Caco-2 (cell line): ENCODE measurements at regions of chr1 and their contacts with region 1.

Region 1: GRCh38 chr1:203216274-203217138 is 13.0 kb downstream of the CHIT1 start:
- DNase-seq: peak; percentile 59 to 80
- H3K4me3 ChIP-seq: no peak overlapping the region
- H3K4me3 Mint-ChIP-seq: no peak overlapping the region
- H3K27ac Mint-ChIP-seq: peak overlapping the region; percentile 72
- H3K4me1 ChIP-seq: peaks cover 38% of the 10 kb centered on the region
- H3K4me1 Mint-ChIP-seq: peaks cover 34% of the 10 kb centered on the region
- H3K27me3 ChIP-seq: no peaks in the 10 kb centered on the region
- H3K27me3 Mint-ChIP-seq: no peaks in the 10 kb centered on the region
- CTCF ChIP-seq: peak; percentile 65 to 84

Region 2: DNA sequence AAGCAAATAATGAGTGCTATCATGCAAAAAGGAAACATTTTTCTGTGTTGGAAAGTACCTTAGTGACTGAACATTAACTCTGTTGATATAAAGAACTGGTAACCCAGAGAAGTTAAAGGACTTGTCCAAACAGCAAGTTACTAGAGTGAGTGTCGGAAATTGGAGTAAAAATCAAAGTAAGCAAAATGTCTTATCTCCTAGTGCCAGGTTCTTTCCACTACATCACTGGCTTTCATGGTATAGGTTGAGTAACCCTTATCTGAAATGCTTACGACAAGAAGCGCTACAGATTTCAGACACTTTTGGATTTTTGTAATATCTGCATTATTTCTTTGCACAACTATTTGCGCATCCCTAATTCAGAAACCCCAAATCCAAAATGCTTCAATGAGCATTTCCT is 311.2 kb before region 1 on chr1:
- CTCF ChIA-PET with region 1: no interaction called
- POLR2A ChIA-PET with region 1: no interaction called
- intact Hi-C with region 1: no loop called
- DNase-seq: no peak
- H3K4me3 ChIP-seq: no peak overlapping the region
- H3K4me3 Mint-ChIP-seq: no peak overlapping the region
- H3K27ac Mint-ChIP-seq: no peak overlapping the region
- H3K4me1 ChIP-seq: no peaks in the 10 kb centered on the region
- H3K4me1 Mint-ChIP-seq: no peaks in the 10 kb centered on the region
- H3K27me3 ChIP-seq: no peaks in the 10 kb centered on the region
- H3K27me3 Mint-ChIP-seq: no peaks in the 10 kb centered on the region
- CTCF ChIP-seq: no peak

Region 3: DNA sequence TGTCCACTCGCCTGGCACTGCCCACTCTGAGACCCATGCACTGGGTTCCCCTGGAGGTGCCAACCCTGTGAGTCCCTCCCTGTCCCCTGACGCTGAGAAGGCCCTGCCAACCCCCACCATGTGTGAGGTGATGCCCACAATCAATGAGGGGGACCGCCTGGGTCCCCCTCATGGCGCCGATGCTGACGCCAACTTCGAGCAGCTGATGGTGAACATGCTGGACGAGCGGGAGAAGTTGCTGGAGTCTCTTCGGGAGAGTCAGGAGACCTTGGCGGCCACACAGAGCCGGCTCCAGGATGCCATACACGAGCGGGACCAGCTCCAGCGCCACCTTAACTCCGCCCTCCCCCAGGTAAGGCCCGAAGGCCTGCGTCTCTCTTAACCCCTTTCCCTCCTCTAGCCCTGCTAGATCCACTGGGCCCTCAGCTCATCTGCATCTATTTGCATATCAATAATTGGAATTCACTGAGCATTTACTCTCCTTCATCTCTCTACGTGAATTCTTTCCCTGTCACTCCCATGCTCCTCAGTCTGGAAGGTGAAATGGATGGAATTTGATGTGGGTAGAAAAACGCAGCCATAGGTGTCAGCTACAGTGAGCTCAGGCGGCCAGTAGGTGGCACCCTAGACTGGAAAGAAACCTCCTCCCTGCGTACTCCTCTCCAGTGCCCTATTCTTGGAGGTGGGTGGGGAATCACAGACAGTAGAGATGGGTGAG is 177.5 kb before region 1 on chr1:
- CTCF ChIA-PET with region 1: interaction called, 56 read pairs
- POLR2A ChIA-PET with region 1: no interaction called
- intact Hi-C with region 1: loop called (anchors 1 kb)
- DNase-seq: peak; percentile 74 to 80
- H3K4me3 ChIP-seq: no peak overlapping the region
- H3K4me3 Mint-ChIP-seq: no peak overlapping the region
- H3K27ac Mint-ChIP-seq: no peak overlapping the region
- H3K4me1 ChIP-seq: peaks cover 8% of the 10 kb centered on the region; the same call in 1 of the 2 replicates
- H3K4me1 Mint-ChIP-seq: peaks cover 21% of the 10 kb centered on the region
- H3K27me3 ChIP-seq: no peaks in the 10 kb centered on the region
- H3K27me3 Mint-ChIP-seq: no peaks in the 10 kb centered on the region
- CTCF ChIP-seq: peak; percentile 87 to 93

Region 4: DNA sequence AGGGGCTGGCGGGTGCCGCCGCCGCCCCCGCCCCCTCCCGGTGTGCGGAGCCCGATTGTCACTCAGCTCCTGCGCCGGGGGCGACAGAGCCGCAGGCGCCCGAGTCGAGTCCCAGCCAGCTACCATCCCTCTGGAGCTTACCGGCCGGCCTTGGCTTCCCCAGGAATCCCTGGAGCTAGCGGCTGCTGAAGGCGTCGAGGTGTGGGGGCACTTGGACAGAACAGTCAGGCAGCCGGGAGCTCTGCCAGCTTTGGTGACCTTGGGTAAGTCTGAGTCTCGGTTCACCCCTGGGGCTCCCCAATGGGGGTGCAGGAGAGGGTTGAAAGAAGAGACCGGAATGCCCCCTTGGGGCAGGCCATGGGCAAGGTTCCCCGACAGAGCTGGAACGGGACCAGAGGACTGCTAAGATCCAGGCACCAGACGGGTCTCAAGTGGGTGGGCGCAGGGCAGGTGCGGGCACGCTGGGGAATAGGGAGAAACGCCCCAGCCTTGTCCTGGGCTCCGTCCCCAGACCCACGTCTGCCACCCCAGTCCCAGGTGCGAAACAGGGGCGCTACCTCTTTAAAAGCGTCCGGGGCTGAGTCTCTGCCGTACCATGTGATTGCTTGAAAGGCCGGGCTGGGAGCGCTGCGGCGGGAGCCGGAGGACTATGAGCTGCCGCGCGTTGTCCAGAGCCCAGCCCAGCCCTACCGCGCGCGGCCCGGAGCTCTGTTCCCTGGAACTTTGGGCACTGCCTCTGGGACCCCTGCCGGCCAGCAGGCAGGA is 88.7 kb before region 1 on chr1 and contains the start of gene ADORA1:
- CTCF ChIA-PET with region 1: interaction called, 56 read pairs
- POLR2A ChIA-PET with region 1: interaction called, 5 read pairs
- intact Hi-C with region 1: no loop called
- DNase-seq: peak; percentile 66 to 78
- H3K4me3 ChIP-seq: peak within 1 kb of the TSS; percentile 50
- H3K4me3 Mint-ChIP-seq: peak within 1 kb of the TSS; percentile 84
- H3K27ac Mint-ChIP-seq: peak within 1 kb of the TSS; percentile 65
- H3K4me1 ChIP-seq: peaks cover 16% of the 10 kb centered on the region
- H3K4me1 Mint-ChIP-seq: peaks cover 26% of the 10 kb centered on the region
- H3K27me3 ChIP-seq: no peaks in the 10 kb centered on the region
- H3K27me3 Mint-ChIP-seq: no peaks in the 10 kb centered on the region
- CTCF ChIP-seq: peak; percentile 11 to 46
- total RNA-seq, gene ADORA1: 46.0 and 50.4 TPM in 2 replicates

Region 5: GRCh38 chr1:203172128-203173010 is 44.1 kb before region 1 on chr1:
- CTCF ChIA-PET with region 1: interaction called, 14 read pairs
- POLR2A ChIA-PET with region 1: no interaction called
- intact Hi-C with region 1: no loop called
- DNase-seq: peak; percentile 63 to 80
- H3K4me3 ChIP-seq: no peak overlapping the region
- H3K4me3 Mint-ChIP-seq: no peak overlapping the region
- H3K27ac Mint-ChIP-seq: peak overlapping the region; percentile 69
- H3K4me1 ChIP-seq: peaks cover 70% of the 10 kb centered on the region
- H3K4me1 Mint-ChIP-seq: peaks cover 65% of the 10 kb centered on the region
- H3K27me3 ChIP-seq: no peaks in the 10 kb centered on the region
- H3K27me3 Mint-ChIP-seq: no peaks in the 10 kb centered on the region
- CTCF ChIP-seq: peak; percentile 81 to 82

Region 6: GRCh38 chr1:203187304-203187685 is 29.2 kb before region 1 on chr1:
- CTCF ChIA-PET with region 1: interaction called, 16 read pairs
- POLR2A ChIA-PET with region 1: interaction called, 5 read pairs
- intact Hi-C with region 1: loop called (anchors 1 kb)
- DNase-seq: no peak
- H3K4me3 ChIP-seq: no peak overlapping the region
- H3K4me3 Mint-ChIP-seq: peak overlapping the region; percentile 76
- H3K27ac Mint-ChIP-seq: peak overlapping the region; percentile 86
- H3K4me1 ChIP-seq: peaks cover 68% of the 10 kb centered on the region
- H3K4me1 Mint-ChIP-seq: peaks cover 62% of the 10 kb centered on the region
- H3K27me3 ChIP-seq: no peaks in the 10 kb centered on the region
- H3K27me3 Mint-ChIP-seq: no peaks in the 10 kb centered on the region
- CTCF ChIP-seq: no peak

Region 7: DNA sequence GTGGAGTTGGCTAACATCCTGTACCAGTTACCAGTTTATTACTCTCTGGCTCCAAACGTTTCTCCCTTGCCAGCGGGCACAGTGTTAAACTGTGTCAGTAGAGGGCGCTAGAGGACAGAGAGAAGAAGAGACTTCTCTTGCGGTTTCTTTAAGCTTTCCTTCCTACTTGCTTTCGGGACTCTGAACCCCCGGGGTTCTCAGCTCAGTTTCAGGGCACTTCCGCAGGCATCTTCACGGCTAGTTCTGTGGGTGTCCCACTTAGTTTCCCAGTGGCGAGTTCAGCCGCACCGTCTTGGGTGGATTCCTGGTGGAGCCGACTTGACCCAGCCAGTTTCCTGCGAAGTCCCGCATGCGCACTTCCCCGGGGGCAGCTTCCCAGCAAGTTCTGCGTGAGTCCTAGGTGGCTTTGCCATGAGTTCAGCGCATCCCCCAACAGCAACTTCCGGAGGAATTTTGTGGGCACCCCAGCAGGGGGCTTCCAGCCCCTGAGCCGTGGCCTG is 50.9 kb after region 1 on chr1:
- CTCF ChIA-PET with region 1: interaction called, 16 read pairs
- POLR2A ChIA-PET with region 1: no interaction called
- intact Hi-C with region 1: loop called (anchors 1 kb)
- DNase-seq: peak; percentile 73 to 78
- H3K4me3 ChIP-seq: no peak overlapping the region
- H3K4me3 Mint-ChIP-seq: no peak overlapping the region
- H3K27ac Mint-ChIP-seq: no peak overlapping the region
- H3K4me1 ChIP-seq: peaks cover 6% of the 10 kb centered on the region; the same call in 1 of the 2 replicates
- H3K4me1 Mint-ChIP-seq: peaks cover 12% of the 10 kb centered on the region
- H3K27me3 ChIP-seq: no peaks in the 10 kb centered on the region
- H3K27me3 Mint-ChIP-seq: no peaks in the 10 kb centered on the region
- CTCF ChIP-seq: peak; percentile 80 to 83

Region 8: DNA sequence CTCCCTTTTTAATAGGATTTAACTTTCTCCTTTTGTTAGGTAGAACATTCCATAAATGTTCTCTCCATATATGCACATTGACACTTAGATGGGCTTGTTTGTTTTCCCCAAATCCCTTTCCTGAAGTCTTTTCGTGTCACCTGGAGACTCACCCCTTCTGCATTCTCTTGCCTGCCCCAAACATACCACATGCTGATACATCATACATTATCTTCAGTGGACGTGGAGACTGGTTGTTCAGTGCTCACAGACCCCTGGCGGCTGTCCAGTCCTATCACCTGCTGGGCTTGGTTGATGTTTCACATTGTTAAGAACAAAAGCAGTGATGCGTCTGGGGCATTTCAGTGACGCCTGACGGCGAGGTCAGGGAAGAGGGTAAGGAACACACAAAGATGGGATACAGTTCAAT is 112.2 kb after region 1 on chr1:
- CTCF ChIA-PET with region 1: no interaction called
- POLR2A ChIA-PET with region 1: no interaction called
- intact Hi-C with region 1: no loop called
- DNase-seq: peak in 1 of 2 experiments; percentile 45
- H3K4me3 ChIP-seq: no peak overlapping the region
- H3K4me3 Mint-ChIP-seq: peak overlapping the region; percentile 85
- H3K27ac Mint-ChIP-seq: peak overlapping the region; percentile 12
- H3K4me1 ChIP-seq: peaks cover 13% of the 10 kb centered on the region; the same call in 1 of the 2 replicates
- H3K4me1 Mint-ChIP-seq: peaks cover 9% of the 10 kb centered on the region
- H3K27me3 ChIP-seq: no peaks in the 10 kb centered on the region
- H3K27me3 Mint-ChIP-seq: peaks cover 2% of the 10 kb centered on the region
- CTCF ChIP-seq: peak; percentile 27 to 40